Mammary epithelial cell (primary cell): ENCODE measurements at regions of chr14 and their contacts with region 1.

Region 1: GRCh38 chr14:87869619-87870583 is 123.1 kb downstream of the GALC start:
- DNase-seq: peak; percentile 91
- H3K4me3 ChIP-seq: no peak overlapping the region
- H3K27ac ChIP-seq: peak overlapping the region; percentile 61
- H3K4me1 ChIP-seq: peaks cover 33% of the 10 kb centered on the region
- H3K27me3 ChIP-seq: no peaks in the 10 kb centered on the region
- CTCF ChIP-seq: no peak

Region 2: DNA sequence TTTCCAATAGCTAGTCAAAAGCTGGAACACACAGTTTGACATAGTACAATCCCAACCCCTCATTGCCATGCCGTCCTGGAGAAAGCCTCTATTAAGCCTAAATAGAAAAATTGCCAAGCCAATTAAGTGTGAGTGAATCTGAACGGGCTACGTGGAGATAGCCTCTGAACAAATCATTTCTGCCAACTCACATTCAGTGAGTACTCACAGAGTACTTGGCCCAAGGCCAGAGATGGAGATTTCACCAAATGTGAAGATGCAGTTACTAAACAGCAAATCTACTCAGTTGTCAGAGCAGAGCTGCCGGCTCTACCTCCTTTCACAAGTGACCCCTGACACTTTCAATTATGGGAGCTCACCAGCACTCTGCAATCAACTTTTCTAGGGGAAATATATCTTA is 226.9 kb before region 1 on chr14:
- CTCF ChIA-PET with region 1: no interaction called
- dilution Hi-C with region 1: no loop called
- in situ Hi-C with region 1: no loop called
- intact Hi-C with region 1: no loop called
- DNase-seq: peak; percentile 5
- H3K4me3 ChIP-seq: no peak overlapping the region
- H3K27ac ChIP-seq: no peak overlapping the region
- H3K4me1 ChIP-seq: no peaks in the 10 kb centered on the region
- H3K27me3 ChIP-seq: no peaks in the 10 kb centered on the region
- CTCF ChIP-seq: no peak

Region 3: GRCh38 chr14:87810711-87811110 is 59.2 kb before region 1 on chr14:
- CTCF ChIA-PET with region 1: no interaction called
- dilution Hi-C with region 1: no loop called
- in situ Hi-C with region 1: loop called in 1 of 2 experiments (anchors 10 kb)
- intact Hi-C with region 1: no loop called
- DNase-seq: no peak
- H3K4me3 ChIP-seq: no peak overlapping the region
- H3K27ac ChIP-seq: no peak overlapping the region
- H3K4me1 ChIP-seq: peaks cover 8% of the 10 kb centered on the region
- H3K27me3 ChIP-seq: no peaks in the 10 kb centered on the region
- CTCF ChIP-seq: no peak

Region 4: GRCh38 chr14:87992718-87993628 is 123.1 kb after region 1 on chr14 and contains the start of gene GALC:
- CTCF ChIA-PET with region 1: no interaction called
- dilution Hi-C with region 1: no loop called
- in situ Hi-C with region 1: no loop called
- intact Hi-C with region 1: loop called (anchors 5 kb)
- DNase-seq: peak; percentile 75
- H3K4me3 ChIP-seq: peak within 1 kb of the TSS; percentile 39 to 62 (median 60)
- H3K27ac ChIP-seq: peak within 1 kb of the TSS; percentile 15
- H3K4me1 ChIP-seq: peaks cover 8% of the 10 kb centered on the region
- H3K27me3 ChIP-seq: no peaks in the 10 kb centered on the region
- CTCF ChIP-seq: peak in 1 of 2 donors; percentile 7
- total RNA-seq, gene GALC: 7.1 to 20.2 TPM

Region 5: GRCh38 chr14:88075269-88075981 is 205.5 kb after region 1 on chr14:
- CTCF ChIA-PET with region 1: no interaction called
- dilution Hi-C with region 1: no loop called
- in situ Hi-C with region 1: no loop called
- intact Hi-C with region 1: no loop called
- DNase-seq: no peak
- H3K4me3 ChIP-seq: no peak overlapping the region
- H3K27ac ChIP-seq: no peak overlapping the region
- H3K4me1 ChIP-seq: no peaks in the 10 kb centered on the region
- H3K27me3 ChIP-seq: no peaks in the 10 kb centered on the region
- CTCF ChIP-seq: no peak